ENCODE measurements at regions of chr12 and their contacts with region 1.

Region 1: DNA sequence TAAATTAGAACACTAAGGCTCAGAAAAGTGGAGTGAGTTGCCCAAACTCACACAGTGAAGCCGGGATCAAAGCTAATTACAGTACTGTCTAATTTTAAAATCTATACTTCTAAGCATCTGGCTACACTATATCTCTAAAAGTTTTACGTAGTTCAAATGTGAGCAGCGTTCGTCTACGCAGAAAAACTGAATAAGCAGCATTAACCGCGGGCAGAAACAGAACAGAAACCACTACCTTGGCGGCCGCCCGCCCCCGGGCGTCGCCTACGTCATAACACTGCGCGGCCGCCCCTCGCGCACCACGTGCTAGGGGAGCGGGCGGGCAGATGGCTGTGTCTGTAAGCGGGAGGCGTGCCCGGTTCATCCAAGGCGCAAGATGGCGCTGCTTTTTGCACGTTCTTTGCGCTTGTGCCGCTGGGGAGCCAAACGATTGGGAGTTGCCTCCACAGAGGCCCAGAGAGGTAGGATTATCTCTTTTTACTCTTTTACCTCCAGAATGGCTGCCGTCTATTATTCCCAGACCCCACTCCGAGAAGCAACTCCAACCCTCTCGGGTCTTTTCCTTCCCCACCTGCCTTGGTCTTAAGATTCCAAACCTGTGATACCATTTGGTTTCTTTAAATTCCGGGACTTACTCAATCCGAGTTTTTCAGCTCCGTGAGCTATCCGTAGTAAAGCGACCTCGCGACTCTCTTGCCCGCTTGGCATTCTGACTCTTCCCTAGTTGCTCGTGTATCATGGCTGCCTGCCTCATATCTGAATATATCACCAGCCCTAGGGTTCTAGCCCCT is at the start of gene SPRYD4:
- DNase-seq: peak; percentile 99
- H3K4me3 Mint-ChIP-seq: peak within 1 kb of the TSS; percentile 92
- H3K27ac Mint-ChIP-seq: peak within 1 kb of the TSS; percentile 98
- H3K4me1 Mint-ChIP-seq: peaks cover 24% of the 10 kb centered on the region
- H3K27me3 Mint-ChIP-seq: no peaks in the 10 kb centered on the region
- total RNA-seq, gene SPRYD4: 5.2 and 5.5 TPM in 2 replicates

Region 2: GRCh38 chr12:56127888-56128669 is 340.3 kb before region 1 on chr12 and contains the start of gene ESYT1:
- intact Hi-C with region 1: loop called (anchors 2 kb)
- DNase-seq: peak; percentile 99
- H3K4me3 Mint-ChIP-seq: peak within 1 kb of the TSS; percentile 98
- H3K27ac Mint-ChIP-seq: peak within 1 kb of the TSS; percentile 94
- H3K4me1 Mint-ChIP-seq: peaks cover 65% of the 10 kb centered on the region
- H3K27me3 Mint-ChIP-seq: no peaks in the 10 kb centered on the region
- total RNA-seq, gene ESYT1: 155 and 158 TPM in 2 replicates

Region 3: GRCh38 chr12:56146492-56147460 is 321.6 kb before region 1 on chr12:
- intact Hi-C with region 1: no loop called
- DNase-seq: no peak
- H3K4me3 Mint-ChIP-seq: no peak overlapping the region
- H3K27ac Mint-ChIP-seq: peak overlapping the region; percentile 15
- H3K4me1 Mint-ChIP-seq: peaks cover 27% of the 10 kb centered on the region
- H3K27me3 Mint-ChIP-seq: no peaks in the 10 kb centered on the region

Region 4: GRCh38 chr12:56266693-56267442 is 201.5 kb before region 1 on chr12 and contains the start of gene COQ10A:
- intact Hi-C with region 1: loop called (anchors 10 kb)
- DNase-seq: peak; percentile 96
- H3K4me3 Mint-ChIP-seq: peak within 1 kb of the TSS; percentile 93
- H3K27ac Mint-ChIP-seq: peak within 1 kb of the TSS; percentile 94
- H3K4me1 Mint-ChIP-seq: peaks cover 14% of the 10 kb centered on the region
- H3K27me3 Mint-ChIP-seq: no peaks in the 10 kb centered on the region
- total RNA-seq, gene COQ10A: 17.0 TPM in 2 replicates

Region 5: DNA sequence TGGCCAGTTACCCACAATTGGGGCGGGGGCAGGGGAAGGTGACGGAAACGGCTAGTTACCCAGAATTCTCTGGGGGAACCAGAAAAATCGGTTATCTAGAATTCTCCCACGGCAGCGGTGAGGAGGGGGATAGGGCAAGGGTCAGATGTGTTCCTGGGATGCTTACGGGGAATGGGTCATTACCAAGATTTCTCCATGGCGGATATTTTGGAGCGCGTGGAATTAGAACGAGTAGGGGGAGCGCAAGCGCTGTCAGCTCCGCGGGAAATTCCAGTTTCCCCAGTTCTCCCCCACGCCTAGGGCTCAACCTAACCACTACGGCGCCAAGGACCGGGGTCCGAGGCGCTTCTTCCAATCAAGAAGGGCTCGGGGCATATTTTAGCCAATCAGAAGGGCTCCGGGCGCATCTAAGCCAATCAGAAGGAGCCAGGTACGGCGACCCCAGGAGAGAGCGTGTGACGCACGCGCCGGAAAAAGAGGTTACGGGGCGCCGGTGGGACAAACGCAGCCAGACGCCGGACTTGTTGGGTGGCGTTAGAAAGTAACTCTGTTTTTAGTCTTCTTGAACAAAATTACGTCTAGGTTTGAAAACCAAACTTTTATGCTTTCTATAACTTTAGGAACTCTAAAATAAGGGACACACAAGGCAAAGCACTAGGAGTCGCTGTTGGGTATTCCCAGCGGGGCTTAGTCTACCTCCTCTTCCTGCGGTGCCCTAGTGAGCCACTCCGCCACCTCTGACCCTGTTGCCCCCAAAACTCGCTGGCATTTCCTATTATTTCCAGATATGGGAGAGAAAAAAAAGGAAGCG is 134.5 kb before region 1 on chr12 and contains the start of gene PAN2:
- intact Hi-C with region 1: loop called (anchors 1 kb)
- DNase-seq: peak; percentile 98
- H3K4me3 Mint-ChIP-seq: peak within 1 kb of the TSS; percentile 88
- H3K27ac Mint-ChIP-seq: peak within 1 kb of the TSS; percentile 99
- H3K4me1 Mint-ChIP-seq: peaks cover 42% of the 10 kb centered on the region
- H3K27me3 Mint-ChIP-seq: no peaks in the 10 kb centered on the region
- total RNA-seq, gene PAN2: 31.3 and 34.7 TPM in 2 replicates

Region 6: GRCh38 chr12:56448860-56449621 is 19.4 kb before region 1 on chr12 and contains the start of gene TIMELESS:
- intact Hi-C with region 1: loop called (anchors 1 kb)
- DNase-seq: peak; percentile 97
- H3K4me3 Mint-ChIP-seq: peak within 1 kb of the TSS; percentile 95
- H3K27ac Mint-ChIP-seq: peak within 1 kb of the TSS; percentile 90
- H3K4me1 Mint-ChIP-seq: peaks cover 29% of the 10 kb centered on the region
- H3K27me3 Mint-ChIP-seq: no peaks in the 10 kb centered on the region
- total RNA-seq, gene TIMELESS: 46.5 and 48.8 TPM in 2 replicates

Region 7: GRCh38 chr12:56724972-56725722 is 256.7 kb after region 1 on chr12 and contains the start of gene NACA:
- intact Hi-C with region 1: loop called (anchors 1 kb)
- DNase-seq: peak; percentile 99
- H3K4me3 Mint-ChIP-seq: peak within 1 kb of the TSS; percentile 99
- H3K27ac Mint-ChIP-seq: peak within 1 kb of the TSS; percentile 100
- H3K4me1 Mint-ChIP-seq: peaks cover 43% of the 10 kb centered on the region
- H3K27me3 Mint-ChIP-seq: no peaks in the 10 kb centered on the region
- total RNA-seq, gene NACA: 1,041 and 1,057 TPM in 2 replicates